Sigmoid colon (tissue), 7 donors: ENCODE measurements at regions of chr1 and their contacts with region 1.

Region 1: GRCh38 chr1:239386453-239387303 is at the start of gene CHRM3:
- DNase-seq: peak; percentile 90
- H3K4me3 ChIP-seq: peak within 1 kb of the TSS; percentile 72 to 91 (median 86)
- H3K27ac ChIP-seq: peak within 1 kb of the TSS; percentile 85 to 92 (median 88)
- H3K4me1 ChIP-seq: peaks cover 0 to 23% (median 13%) of the 10 kb centered on the region in 4 donors
- H3K27me3 ChIP-seq: peaks cover 0 to 5% (median 0%) of the 10 kb centered on the region in 3 donors
- CTCF ChIP-seq: peak in 3 of 4 experiments; percentile 15 to 36 (median 21)
- EP300 ChIP-seq: no peak
- POLR2A ChIP-seq: peak in 1 of 2 donors; percentile 49
- total RNA-seq, gene CHRM3: 43.9 to 111 (median 69.0) TPM

Region 2: GRCh38 chr1:239458144-239458500 is 71.4 kb after region 1 on chr1:
- intact Hi-C with region 1: no loop called
- DNase-seq: no peak
- H3K4me3 ChIP-seq: peak overlapping the region in 2 of 4 donors; percentile 2 to 15
- H3K27ac ChIP-seq: peak overlapping the region in 2 of 4 donors; percentile 12 to 39
- H3K4me1 ChIP-seq: peaks cover 0 to 38% (median 8%) of the 10 kb centered on the region in 4 donors
- H3K27me3 ChIP-seq: no peaks in the 10 kb centered on the region
- CTCF ChIP-seq: no peak
- EP300 ChIP-seq: no peak
- POLR2A ChIP-seq: no peak

Region 3: GRCh38 chr1:239547987-239548386 is 161.3 kb after region 1 on chr1:
- intact Hi-C with region 1: loop called (anchors 10 kb)
- DNase-seq: no peak
- H3K4me3 ChIP-seq: no peak overlapping the region
- H3K27ac ChIP-seq: no peak overlapping the region
- H3K4me1 ChIP-seq: peaks cover 0 to 12% (median 3%) of the 10 kb centered on the region in 4 donors
- H3K27me3 ChIP-seq: no peaks in the 10 kb centered on the region
- CTCF ChIP-seq: no peak
- EP300 ChIP-seq: no peak
- POLR2A ChIP-seq: no peak

Region 4: DNA sequence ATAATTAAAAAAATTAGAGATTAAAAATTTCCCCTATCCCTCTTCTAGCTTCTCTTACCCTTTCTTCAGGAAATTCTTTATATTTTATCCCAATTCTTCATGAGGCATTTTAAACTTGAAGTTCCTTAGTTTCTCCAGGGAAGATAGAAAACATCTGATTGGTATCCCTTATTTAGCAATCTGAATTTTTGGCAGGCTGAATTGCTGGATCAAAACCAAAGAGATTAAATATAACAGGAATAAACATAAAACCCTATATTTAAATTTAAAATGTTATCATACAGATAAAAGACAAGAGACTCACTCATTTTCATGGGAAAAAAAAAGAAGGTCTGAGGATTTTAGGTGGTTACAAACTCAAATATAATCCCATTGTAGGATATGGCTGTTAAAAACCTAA is 203.9 kb after region 1 on chr1:
- intact Hi-C with region 1: loop called (anchors 5 kb)
- DNase-seq: no peak
- H3K4me3 ChIP-seq: no peak overlapping the region
- H3K27ac ChIP-seq: peak overlapping the region in 1 of 4 donors; percentile 51
- H3K4me1 ChIP-seq: peaks cover 0 to 29% (median 8%) of the 10 kb centered on the region in 4 donors
- H3K27me3 ChIP-seq: no peaks in the 10 kb centered on the region
- CTCF ChIP-seq: no peak
- EP300 ChIP-seq: no peak
- POLR2A ChIP-seq: no peak

Region 5: GRCh38 chr1:239814303-239814881 is 427.7 kb after region 1 on chr1:
- intact Hi-C with region 1: loop called (anchors 2 kb)
- DNase-seq: peak; percentile 74
- H3K4me3 ChIP-seq: no peak overlapping the region
- H3K27ac ChIP-seq: peak overlapping the region; percentile 66 to 91 (median 83)
- H3K4me1 ChIP-seq: peaks cover 0 to 55% (median 45%) of the 10 kb centered on the region in 4 donors
- H3K27me3 ChIP-seq: no peaks in the 10 kb centered on the region
- CTCF ChIP-seq: no peak
- EP300 ChIP-seq: peak in 1 of 4 donors; percentile 2
- POLR2A ChIP-seq: no peak

Region 6: DNA sequence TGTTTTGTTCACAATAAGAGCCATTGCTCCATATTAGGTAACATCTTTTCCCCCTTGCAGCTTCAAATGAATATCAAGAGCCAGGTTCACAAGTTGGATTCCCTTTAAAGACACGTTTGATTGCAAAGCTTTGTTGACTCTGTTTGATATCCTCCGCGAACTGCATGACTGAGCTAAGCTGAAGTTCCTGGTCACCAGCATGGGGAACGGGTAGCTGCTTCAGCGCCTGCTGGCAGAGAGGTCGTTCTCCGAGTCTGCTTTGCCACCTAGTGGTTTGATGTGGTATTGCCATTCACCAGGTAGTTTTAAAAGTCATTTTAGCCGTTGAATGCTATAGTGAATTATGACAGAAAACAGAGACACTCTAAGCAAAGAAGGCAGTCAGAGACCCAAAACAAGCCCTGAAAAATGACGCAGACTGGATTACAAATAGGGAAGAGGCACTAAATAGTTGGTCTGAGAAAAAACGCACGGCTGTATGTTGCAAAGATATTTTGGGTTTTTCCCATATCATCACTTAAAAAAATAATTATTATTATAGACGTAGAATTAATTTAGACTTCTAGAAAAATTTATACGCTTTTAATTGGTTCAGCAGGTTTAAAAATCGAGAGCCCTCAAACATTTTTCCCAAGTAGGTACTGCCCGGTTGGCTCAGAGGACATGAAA is 511.5 kb after region 1 on chr1:
- intact Hi-C with region 1: loop called (anchors 5 kb)
- DNase-seq: peak; percentile 91
- H3K4me3 ChIP-seq: peak overlapping the region in 3 of 4 donors; percentile 8 to 30 (median 26)
- H3K27ac ChIP-seq: peak overlapping the region in 3 of 4 donors; percentile 25 to 53 (median 35)
- H3K4me1 ChIP-seq: peaks cover 0 to 27% (median 19%) of the 10 kb centered on the region in 4 donors
- H3K27me3 ChIP-seq: no peaks in the 10 kb centered on the region
- CTCF ChIP-seq: peak; percentile 82 to 98 (median 95)
- EP300 ChIP-seq: no peak
- POLR2A ChIP-seq: no peak